PC-9 (cell line): ENCODE measurements at regions of chr22 and their contacts with region 1.

Region 1: DNA sequence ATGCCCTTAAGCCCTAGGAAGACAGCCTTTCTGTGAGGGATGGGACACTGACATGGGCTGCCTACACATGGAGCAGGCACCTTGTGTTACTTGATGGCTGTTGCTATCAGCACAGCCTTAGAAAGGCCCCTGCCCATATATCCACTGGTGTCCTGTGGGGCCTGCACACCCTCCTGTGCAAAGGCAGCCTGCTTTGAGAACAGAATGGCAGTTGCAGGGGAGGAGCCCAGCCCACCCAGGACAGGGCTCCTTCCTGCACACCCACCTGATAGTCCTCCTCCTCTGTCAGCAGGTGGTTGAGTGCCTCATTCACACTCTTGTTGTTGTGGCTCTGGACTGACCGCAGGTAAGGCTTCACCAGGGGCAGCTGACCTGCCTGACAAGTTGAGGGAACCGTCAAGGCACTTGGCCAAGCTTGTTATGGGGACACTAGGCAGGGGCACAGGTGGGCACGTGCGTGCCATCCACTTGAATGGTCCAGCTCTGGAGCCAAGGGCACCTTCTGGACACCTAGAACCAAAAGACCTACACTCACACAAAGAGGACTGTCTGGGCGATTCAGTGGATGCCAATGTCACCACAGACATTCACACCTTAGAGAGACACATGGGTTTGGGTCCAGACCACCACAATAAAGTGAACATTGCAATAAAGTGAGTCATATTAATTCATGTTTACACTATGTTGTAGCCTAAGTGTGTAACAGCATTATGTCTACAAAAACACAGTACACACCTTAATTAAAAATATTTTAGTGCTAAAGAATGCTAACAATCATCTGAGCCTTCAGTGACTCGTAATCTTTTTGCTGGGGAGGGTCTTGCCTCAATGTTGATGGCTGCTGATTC is 9.4 kb upstream of the SLC25A1 start:
- DNase-seq: peak in 1 of 2 experiments; percentile 51
- H3K4me3 ChIP-seq: no peak overlapping the region
- H3K27ac ChIP-seq: no peak overlapping the region
- H3K4me1 ChIP-seq: peaks cover 24% of the 10 kb centered on the region
- H3K27me3 ChIP-seq: no peaks in the 10 kb centered on the region
- CTCF ChIP-seq: no peak

Region 2: DNA sequence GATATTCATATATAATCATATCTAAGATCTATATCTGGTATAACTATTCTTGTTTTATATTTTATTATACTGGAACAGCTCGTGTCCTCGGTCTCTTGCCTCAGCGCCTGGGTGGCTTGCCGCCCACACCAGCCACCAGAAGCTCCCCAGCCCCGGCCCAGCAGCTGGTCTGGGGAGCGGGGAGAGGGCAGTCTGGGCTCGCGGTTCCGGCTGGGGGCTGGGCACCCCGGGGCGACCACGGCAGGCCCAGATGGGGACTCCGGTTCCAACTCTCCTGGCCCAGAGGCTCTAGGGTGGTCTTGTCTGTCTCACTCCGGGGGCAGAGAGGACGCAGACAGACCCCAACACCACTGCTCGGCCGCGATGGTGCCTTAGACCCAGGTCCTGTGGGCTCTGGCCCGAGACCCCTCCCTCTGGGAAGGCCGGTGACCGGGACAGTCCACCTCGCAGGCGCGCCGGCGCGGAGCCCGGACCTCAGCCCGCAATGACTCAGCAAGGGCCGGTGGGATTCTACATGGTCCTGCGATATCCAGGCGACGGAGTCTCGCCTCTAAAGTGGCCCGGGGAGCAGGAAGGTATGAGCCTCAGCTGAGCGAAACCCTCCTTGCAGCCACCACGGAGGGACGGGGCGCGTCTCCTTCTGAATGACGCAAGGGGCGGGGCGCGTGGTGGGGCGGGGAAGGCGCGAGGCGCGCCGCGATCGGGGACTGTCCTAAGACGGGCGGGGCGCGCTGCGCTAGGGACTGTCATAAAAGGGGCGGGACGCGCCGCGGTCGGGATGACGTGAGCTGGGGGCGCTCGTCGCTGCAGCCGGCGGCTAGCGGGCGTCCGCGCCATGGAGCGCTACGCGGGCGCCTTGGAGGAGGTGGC is 282.2 kb before region 1 on chr22 and contains the start of gene DGCR6:
- CTCF ChIA-PET with region 1: no interaction called
- POLR2A ChIA-PET with region 1: interaction called, 15 read pairs
- intact Hi-C with region 1: no loop called
- DNase-seq: no peak
- H3K4me3 ChIP-seq: no peak within 1 kb of the TSS
- H3K27ac ChIP-seq: no peak within 1 kb of the TSS
- H3K4me1 ChIP-seq: no peaks in the 10 kb centered on the region
- H3K27me3 ChIP-seq: no peaks in the 10 kb centered on the region
- CTCF ChIP-seq: no peak
- total RNA-seq, gene DGCR6: 0.63 and 1.4 TPM in 2 replicates

Region 3: GRCh38 chr22:19214078-19214473 is 26.1 kb after region 1 on chr22:
- CTCF ChIA-PET with region 1: no interaction called
- POLR2A ChIA-PET with region 1: interaction called, 17 read pairs
- intact Hi-C with region 1: no loop called
- DNase-seq: no peak
- H3K4me3 ChIP-seq: no peak overlapping the region
- H3K27ac ChIP-seq: no peak overlapping the region
- H3K4me1 ChIP-seq: peaks cover 13% of the 10 kb centered on the region; the same call in 1 of the 2 replicates
- H3K27me3 ChIP-seq: no peaks in the 10 kb centered on the region
- CTCF ChIP-seq: no peak

Region 4: DNA sequence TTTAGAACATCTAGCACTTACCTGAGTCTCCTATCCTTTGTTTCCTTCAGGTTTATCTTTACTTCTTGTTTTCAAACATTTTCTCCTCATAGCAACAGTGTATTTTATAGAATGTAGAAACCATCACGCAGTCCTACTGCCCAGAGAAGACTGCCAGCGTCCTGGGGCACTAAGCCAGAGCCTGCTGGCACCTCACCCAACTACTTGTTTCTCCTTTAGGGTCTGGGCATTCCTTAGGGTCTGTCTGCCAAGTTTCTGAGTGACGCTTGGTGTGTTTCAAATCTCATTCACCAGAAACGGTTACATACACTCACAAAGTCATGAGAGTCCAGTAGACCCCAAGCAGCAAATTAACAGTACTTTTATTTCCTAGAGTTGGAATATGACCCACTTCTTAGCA is 40.2 kb after region 1 on chr22:
- CTCF ChIA-PET with region 1: no interaction called
- POLR2A ChIA-PET with region 1: no interaction called
- intact Hi-C with region 1: no loop called
- DNase-seq: no peak
- H3K4me3 ChIP-seq: no peak overlapping the region
- H3K27ac ChIP-seq: no peak overlapping the region
- H3K4me1 ChIP-seq: no peaks in the 10 kb centered on the region
- H3K27me3 ChIP-seq: no peaks in the 10 kb centered on the region
- CTCF ChIP-seq: no peak

Region 5: GRCh38 chr22:19568337-19569275 is 380.7 kb after region 1 on chr22:
- CTCF ChIA-PET with region 1: no interaction called
- POLR2A ChIA-PET with region 1: no interaction called
- intact Hi-C with region 1: no loop called
- DNase-seq: peak in 1 of 2 experiments; percentile 41
- H3K4me3 ChIP-seq: no peak overlapping the region
- H3K27ac ChIP-seq: no peak overlapping the region
- H3K4me1 ChIP-seq: no peaks in the 10 kb centered on the region
- H3K27me3 ChIP-seq: no peaks in the 10 kb centered on the region
- CTCF ChIP-seq: no peak